Activated CD4-positive, alpha-beta memory T cell treated with anti-CD3 and anti-CD28 coated beads, Interleukin-2, amount 10 ng/mL, durations not matched to agents 7 days and 5 days (primary cell): ENCODE measurements at regions of chr7 and their contacts with region 1.

Region 1: DNA sequence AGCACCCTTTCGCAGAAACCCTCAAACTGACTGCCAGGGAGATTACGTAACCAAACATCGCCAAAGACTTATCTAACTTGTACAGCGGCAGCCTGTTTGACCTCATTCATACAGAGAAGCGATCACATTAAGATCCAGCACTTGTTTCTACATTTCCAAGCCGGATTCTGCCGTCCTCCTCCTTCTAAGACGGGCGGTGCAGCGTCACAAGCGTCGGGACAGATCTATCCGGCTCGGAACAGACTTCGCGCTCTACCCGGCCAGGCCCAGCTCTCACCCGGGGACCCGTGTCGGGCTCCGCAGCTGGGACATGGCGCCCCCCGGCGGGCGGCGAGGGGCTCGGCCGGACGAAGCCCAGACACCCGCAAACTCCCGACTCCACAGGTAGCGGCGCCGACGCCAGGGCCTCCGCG is 373 bp downstream of the H2AZ2 start:
- DNase-seq: peak; percentile 89
- H3K4me3 Mint-ChIP-seq: peak overlapping the region; percentile 96
- H3K27ac Mint-ChIP-seq: peak overlapping the region; percentile 99
- H3K4me1 Mint-ChIP-seq: peaks cover 42% of the 10 kb centered on the region
- H3K27me3 Mint-ChIP-seq: no peaks in the 10 kb centered on the region

Region 2: GRCh38 chr7:44490351-44491200 is 356.9 kb before region 1 on chr7 and contains the start of gene NUDCD3:
- CTCF ChIA-PET with region 1: interaction called, 3 read pairs
- POLR2A ChIA-PET with region 1: interaction called, 25 read pairs
- DNase-seq: peak; percentile 86
- H3K4me3 Mint-ChIP-seq: peak within 1 kb of the TSS; percentile 81
- H3K27ac Mint-ChIP-seq: peak within 1 kb of the TSS; percentile 85
- H3K4me1 Mint-ChIP-seq: peaks cover 43% of the 10 kb centered on the region
- H3K27me3 Mint-ChIP-seq: peaks cover 5% of the 10 kb centered on the region
- total RNA-seq, gene NUDCD3: 91.0 to 97.5 TPM

Region 3: GRCh38 chr7:44508328-44509030 is 339.0 kb before region 1 on chr7:
- CTCF ChIA-PET with region 1: no interaction called
- POLR2A ChIA-PET with region 1: no interaction called
- DNase-seq: no peak
- H3K4me3 Mint-ChIP-seq: no peak overlapping the region
- H3K27ac Mint-ChIP-seq: no peak overlapping the region
- H3K4me1 Mint-ChIP-seq: peaks cover 2% of the 10 kb centered on the region
- H3K27me3 Mint-ChIP-seq: peaks cover 9% of the 10 kb centered on the region

Region 4: DNA sequence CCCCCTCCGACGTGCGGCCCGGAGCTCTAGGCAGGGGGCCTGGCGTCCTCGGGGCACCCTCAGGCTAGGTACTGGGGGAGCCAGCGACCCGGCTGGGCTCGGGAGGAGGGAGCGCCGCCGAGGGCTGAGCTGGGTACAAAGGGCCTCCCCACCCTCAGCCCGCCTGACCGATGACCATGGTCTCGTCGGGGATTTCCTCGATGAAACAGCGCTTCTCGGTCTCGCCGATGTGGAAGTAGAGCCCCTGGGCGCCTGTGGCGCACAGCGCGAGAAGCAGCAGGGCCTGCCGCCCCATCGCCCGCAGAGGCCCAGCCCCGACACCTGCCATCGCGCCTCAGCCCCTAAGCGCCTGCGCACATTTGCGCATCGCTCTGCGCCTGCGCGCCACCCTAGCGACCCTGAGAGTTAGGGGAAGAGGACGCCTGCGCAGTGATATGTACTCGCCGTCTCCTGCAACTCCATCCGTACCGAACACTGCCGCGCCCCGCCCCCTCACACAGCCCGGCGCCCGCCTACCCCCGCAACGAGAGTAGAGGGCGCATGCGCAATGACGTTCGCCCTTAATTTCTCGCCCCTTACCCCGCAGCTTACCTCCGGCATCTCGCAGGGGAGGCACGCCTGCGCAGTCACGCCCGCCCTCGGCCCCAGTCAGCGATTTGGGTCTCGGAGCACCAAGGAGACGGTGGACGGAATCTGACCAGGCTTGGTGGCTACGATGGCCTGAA is 265.5 kb before region 1 on chr7 and contains the start of gene TMED4:
- CTCF ChIA-PET with region 1: interaction called, 7 read pairs
- POLR2A ChIA-PET with region 1: interaction called, 82 read pairs
- DNase-seq: peak; percentile 100
- H3K4me3 Mint-ChIP-seq: peak within 1 kb of the TSS; percentile 92
- H3K27ac Mint-ChIP-seq: peak within 1 kb of the TSS; percentile 85
- H3K4me1 Mint-ChIP-seq: peaks cover 42% of the 10 kb centered on the region
- H3K27me3 Mint-ChIP-seq: no peaks in the 10 kb centered on the region
- total RNA-seq, gene TMED4: 76.0 to 81.8 TPM

Region 5: DNA sequence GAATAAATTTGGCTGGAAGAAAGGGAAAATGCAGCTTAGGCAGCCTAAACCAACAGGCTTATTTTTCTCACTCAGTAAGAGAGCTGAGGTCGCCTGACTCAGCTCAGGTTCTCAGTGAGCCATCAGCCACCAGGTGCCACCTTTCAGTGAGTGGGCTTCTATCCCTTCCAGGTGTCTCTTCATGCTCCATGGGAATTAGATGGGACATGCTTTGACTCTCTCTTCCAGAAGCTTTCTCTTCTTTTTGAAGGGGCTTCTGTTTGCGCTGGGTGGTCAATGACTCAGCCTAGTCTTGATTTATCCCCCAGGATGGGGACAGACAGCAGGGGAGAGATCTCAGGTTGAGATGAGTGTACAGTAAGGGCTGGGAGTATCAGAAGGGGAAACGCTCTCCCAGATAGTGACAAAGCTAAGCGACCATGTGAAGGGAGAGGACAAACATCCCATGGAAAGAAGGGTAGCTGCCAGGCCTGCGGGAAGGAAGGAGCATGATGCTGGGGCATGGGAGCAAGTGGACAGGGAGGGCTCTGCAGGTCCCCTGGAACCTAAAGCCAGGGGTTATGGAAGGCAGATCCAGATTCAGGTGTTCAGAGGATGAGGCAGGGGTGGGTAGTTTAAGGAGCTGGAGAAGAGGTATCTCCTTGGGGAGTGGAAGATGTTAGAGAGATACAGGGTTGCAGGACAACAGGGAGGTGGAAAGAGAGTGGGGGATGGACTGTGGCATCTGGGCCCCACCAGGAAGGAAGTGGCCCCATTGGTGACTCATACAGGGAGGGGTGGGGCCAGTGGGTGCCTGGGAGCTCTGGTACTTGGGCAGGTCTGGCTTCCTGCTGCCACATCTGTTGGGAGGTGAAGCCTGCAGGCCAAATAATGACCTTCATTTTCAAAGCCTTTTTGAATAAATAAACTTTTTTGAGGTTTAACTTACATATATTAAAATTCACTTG is 208.6 kb before region 1 on chr7:
- CTCF ChIA-PET with region 1: interaction called, 6 read pairs
- POLR2A ChIA-PET with region 1: interaction called, 70 read pairs
- DNase-seq: peak; percentile 93
- H3K4me3 Mint-ChIP-seq: peak overlapping the region; percentile 73
- H3K27ac Mint-ChIP-seq: peak overlapping the region; percentile 100
- H3K4me1 Mint-ChIP-seq: peaks cover 83% of the 10 kb centered on the region
- H3K27me3 Mint-ChIP-seq: no peaks in the 10 kb centered on the region

Region 6: DNA sequence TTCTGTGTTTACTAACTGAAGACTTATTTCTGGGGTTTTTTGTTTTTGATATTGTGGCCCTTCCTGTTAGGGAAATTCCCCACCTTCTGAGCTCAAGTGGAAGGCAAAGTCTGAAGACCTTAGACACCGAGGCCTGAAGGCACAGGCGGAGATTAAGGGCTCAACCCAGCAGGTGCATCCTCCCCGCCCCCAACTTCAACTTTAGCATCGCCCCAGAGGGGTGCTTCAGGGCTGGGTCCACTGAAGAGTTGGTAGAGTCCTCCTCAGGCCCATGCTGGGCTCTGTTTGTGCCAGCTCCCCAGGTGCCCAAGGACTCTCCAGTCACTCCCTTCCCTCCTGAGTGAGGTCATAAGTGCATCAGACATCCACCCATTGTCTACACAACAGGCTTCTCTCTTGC is 60.5 kb before region 1 on chr7:
- CTCF ChIA-PET with region 1: no interaction called
- POLR2A ChIA-PET with region 1: no interaction called
- DNase-seq: no peak
- H3K4me3 Mint-ChIP-seq: no peak overlapping the region
- H3K27ac Mint-ChIP-seq: no peak overlapping the region
- H3K4me1 Mint-ChIP-seq: no peaks in the 10 kb centered on the region
- H3K27me3 Mint-ChIP-seq: no peaks in the 10 kb centered on the region

Region 7: GRCh38 chr7:44824894-44825526 is 22.5 kb before region 1 on chr7:
- CTCF ChIA-PET with region 1: no interaction called
- POLR2A ChIA-PET with region 1: interaction called, 40 read pairs
- DNase-seq: no peak
- H3K4me3 Mint-ChIP-seq: no peak overlapping the region
- H3K27ac Mint-ChIP-seq: peak overlapping the region; percentile 9
- H3K4me1 Mint-ChIP-seq: peaks cover 16% of the 10 kb centered on the region
- H3K27me3 Mint-ChIP-seq: no peaks in the 10 kb centered on the region

Region 8: DNA sequence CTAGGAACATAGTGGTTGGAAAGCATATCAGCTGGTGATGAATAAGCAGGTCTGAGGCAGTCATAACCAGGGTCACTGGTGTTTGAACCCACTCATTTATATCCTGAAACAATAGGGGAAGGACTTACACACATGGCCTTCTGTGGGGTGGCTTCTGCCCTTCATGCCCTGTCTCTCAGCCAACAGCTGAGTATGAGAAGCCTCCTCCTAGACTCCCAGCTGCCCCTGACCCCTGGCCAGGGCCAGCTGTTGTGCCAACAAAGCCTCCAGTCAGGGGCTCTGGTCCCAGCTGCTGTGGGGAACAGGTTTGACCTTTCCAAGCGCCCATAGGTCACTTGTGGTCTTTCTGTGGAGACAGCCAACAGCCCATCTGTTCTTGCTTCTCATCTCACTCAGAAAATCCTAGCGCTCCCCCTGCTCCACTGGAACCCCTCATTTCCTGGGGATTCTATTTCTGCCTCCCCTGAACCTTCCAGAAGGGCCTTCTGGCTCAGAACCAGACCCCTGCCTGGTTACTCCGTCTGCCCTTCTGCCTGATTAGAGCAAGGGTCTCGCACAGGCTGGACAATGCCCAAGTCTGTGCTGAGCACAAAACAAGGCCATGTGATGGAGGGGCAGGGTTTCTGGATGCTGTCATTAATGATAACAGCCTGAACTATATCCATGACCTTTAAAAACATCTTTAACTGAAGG is 47.5 kb after region 1 on chr7:
- CTCF ChIA-PET with region 1: interaction called, 3 read pairs
- POLR2A ChIA-PET with region 1: interaction called, 19 read pairs
- DNase-seq: no peak
- H3K4me3 Mint-ChIP-seq: no peak overlapping the region
- H3K27ac Mint-ChIP-seq: no peak overlapping the region
- H3K4me1 Mint-ChIP-seq: peaks cover 25% of the 10 kb centered on the region
- H3K27me3 Mint-ChIP-seq: no peaks in the 10 kb centered on the region

Region 9: GRCh38 chr7:44999245-45000095 is 152.0 kb after region 1 on chr7:
- CTCF ChIA-PET with region 1: no interaction called
- POLR2A ChIA-PET with region 1: interaction called, 18 read pairs
- DNase-seq: peak; percentile 100
- H3K4me3 Mint-ChIP-seq: peak overlapping the region; percentile 80
- H3K27ac Mint-ChIP-seq: peak overlapping the region; percentile 87
- H3K4me1 Mint-ChIP-seq: peaks cover 59% of the 10 kb centered on the region
- H3K27me3 Mint-ChIP-seq: no peaks in the 10 kb centered on the region